Heart right ventricle (tissue), 16 donors: ENCODE measurements at regions of chr9 and their contacts with region 1.

Region 1: GRCh38 chr9:124126571-124127289 is 115.2 kb downstream of the LHX2 start:
- DNase-seq: peak; percentile 54 to 75
- ATAC-seq: peak in 7 of 8 donors; percentile 48 to 71 (median 59)
- H3K4me3 ChIP-seq: no peak overlapping the region
- H3K27ac ChIP-seq: no peak overlapping the region
- H3K4me1 ChIP-seq: peaks cover 0 to 4% (median 0%) of the 10 kb centered on the region in 9 donors
- H3K27me3 ChIP-seq: peaks cover 0 to 19% (median 14%) of the 10 kb centered on the region in 7 donors
- CTCF ChIP-seq: peak; percentile 93 to 99 (median 98)

Region 2: GRCh38 chr9:124012368-124013301 is 114.1 kb before region 1 on chr9:
- intact Hi-C with region 1: no loop called
- DNase-seq: no peak
- ATAC-seq: no peak
- H3K4me3 ChIP-seq: peak overlapping the region in 9 of 10 donors; percentile 13 to 57 (median 42)
- H3K27ac ChIP-seq: no peak overlapping the region
- H3K4me1 ChIP-seq: peaks cover 13 to 79% (median 55%) of the 10 kb centered on the region in 9 donors
- H3K27me3 ChIP-seq: peaks cover 68 to 100% (median 100%) of the 10 kb centered on the region in 7 donors
- CTCF ChIP-seq: no peak

Region 3: GRCh38 chr9:124174433-124174832 is 47.7 kb after region 1 on chr9:
- intact Hi-C with region 1: loop called in 1 of 10 experiments (anchors 5 kb)
- DNase-seq: no peak
- ATAC-seq: no peak
- H3K4me3 ChIP-seq: no peak overlapping the region
- H3K27ac ChIP-seq: no peak overlapping the region
- H3K4me1 ChIP-seq: peaks cover 0 to 8% (median 0%) of the 10 kb centered on the region in 9 donors
- H3K27me3 ChIP-seq: peaks cover 0 to 3% (median 0%) of the 10 kb centered on the region in 7 donors
- CTCF ChIP-seq: no peak

Region 4: GRCh38 chr9:124320062-124320973 is 193.6 kb after region 1 on chr9:
- intact Hi-C with region 1: loop called in 9 of 10 experiments (anchors 1 to 5 kb)
- DNase-seq: peak; percentile 66 to 77
- ATAC-seq: peak; percentile 83 to 89 (median 88)
- H3K4me3 ChIP-seq: no peak overlapping the region
- H3K27ac ChIP-seq: no peak overlapping the region
- H3K4me1 ChIP-seq: peaks cover 0 to 15% (median 3%) of the 10 kb centered on the region in 9 donors
- H3K27me3 ChIP-seq: no peaks in the 10 kb centered on the region
- CTCF ChIP-seq: peak; percentile 73 to 92 (median 85)

Region 5: DNA sequence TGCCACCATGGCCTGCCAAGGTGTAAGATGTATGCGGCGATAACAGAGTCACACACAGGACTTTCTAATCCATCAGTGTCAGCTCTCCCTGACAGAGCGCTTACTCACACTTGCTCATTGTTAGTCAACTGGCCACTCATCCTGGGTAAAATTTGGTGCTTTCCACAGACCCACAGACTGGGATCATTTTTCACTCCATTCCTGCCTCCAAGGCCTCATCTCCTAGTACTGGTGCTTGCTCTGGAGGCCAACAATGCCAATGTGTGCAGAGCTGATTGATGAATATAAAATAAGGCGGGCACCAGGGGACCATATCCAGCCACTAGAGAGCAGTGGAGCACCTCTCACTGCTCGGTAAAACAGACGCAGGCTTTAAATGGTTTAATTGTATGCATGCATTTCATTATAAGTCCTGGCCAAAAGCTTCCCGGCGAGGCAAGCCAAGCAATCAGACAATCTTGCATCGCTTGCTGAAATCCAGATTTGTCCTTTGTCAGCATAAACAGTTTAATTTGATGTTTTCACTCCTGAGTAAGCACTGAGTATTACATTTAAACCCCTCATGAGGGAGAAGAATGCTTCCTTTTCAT is 266.2 kb after region 1 on chr9:
- intact Hi-C with region 1: loop called in 3 of 10 experiments (anchors 10 kb)
- DNase-seq: no peak
- ATAC-seq: peak in 1 of 8 donors; percentile 16
- H3K4me3 ChIP-seq: no peak overlapping the region
- H3K27ac ChIP-seq: no peak overlapping the region
- H3K4me1 ChIP-seq: peaks cover 3 to 71% (median 48%) of the 10 kb centered on the region in 9 donors
- H3K27me3 ChIP-seq: no peaks in the 10 kb centered on the region
- CTCF ChIP-seq: peak in 4 of 9 donors; percentile 13 to 23 (median 16)

Region 6: DNA sequence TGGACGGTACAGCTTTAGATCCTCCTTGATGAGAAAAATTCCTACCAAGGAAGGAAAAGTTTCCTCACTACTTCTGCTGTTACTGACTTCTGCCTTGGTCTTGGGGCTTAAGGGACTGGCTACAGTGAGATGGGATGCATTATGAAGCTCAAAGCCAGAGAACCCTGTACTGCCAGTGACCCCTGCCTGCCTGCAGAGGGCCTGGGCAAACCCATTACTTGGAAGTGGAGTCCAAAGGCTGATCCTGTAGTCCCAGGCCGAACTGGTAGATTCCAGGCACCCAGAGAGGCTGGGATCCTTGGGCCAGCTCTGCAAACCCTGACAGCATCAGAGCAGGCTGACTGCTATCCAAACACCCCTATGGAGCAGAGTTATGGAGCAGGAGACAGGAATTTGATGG is 406.2 kb after region 1 on chr9:
- intact Hi-C with region 1: loop called in 9 of 10 experiments (anchors 2 to 10 kb)
- DNase-seq: no peak
- ATAC-seq: no peak
- H3K4me3 ChIP-seq: no peak overlapping the region
- H3K27ac ChIP-seq: no peak overlapping the region
- H3K4me1 ChIP-seq: no peaks in the 10 kb centered on the region
- H3K27me3 ChIP-seq: no peaks in the 10 kb centered on the region
- CTCF ChIP-seq: no peak

Region 7: GRCh38 chr9:124537926-124538325 is 411.2 kb after region 1 on chr9:
- intact Hi-C with region 1: loop called in 9 of 10 experiments (anchors 2 to 10 kb)
- DNase-seq: no peak
- ATAC-seq: no peak
- H3K4me3 ChIP-seq: no peak overlapping the region
- H3K27ac ChIP-seq: no peak overlapping the region
- H3K4me1 ChIP-seq: no peaks in the 10 kb centered on the region
- H3K27me3 ChIP-seq: no peaks in the 10 kb centered on the region
- CTCF ChIP-seq: no peak